ENCODE measurements at regions of chr3 and their contacts with region 1.

Region 1: DNA sequence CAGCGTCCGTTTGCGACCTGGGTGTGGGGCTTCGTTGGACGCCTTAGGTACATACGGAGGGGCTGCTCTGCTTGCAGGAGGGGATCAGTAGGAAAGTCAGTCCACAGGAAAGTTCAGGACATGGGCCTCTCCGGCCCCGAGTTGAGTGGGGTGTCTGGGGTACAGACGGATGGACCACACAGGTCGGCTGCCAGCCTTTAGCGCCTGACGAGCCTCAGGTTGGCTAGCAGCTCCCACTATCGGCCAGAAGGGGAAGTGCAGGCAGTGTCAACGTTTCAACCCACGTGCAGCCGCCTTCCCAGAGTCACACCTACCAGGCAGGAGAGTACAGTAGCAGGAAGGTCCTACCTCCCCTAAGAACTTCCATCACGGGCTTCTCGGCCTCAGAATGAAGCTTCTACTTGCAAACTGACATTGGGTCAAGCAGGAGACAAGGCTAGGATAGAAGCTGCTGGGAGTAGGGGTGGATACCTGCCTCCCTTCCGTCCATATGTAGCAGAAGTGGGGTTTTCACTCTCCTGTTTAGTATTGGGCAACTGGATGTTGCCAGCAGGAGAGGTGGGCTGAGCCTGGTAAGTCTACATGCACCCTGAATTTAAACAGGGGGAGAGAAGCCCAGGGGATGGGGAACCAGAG is 1.8 kb upstream of the SCN5A start:
- DNase-seq: peak; percentile 9
- ATAC-seq: peak; percentile 86
- H3K4me3 ChIP-seq: no peak overlapping the region
- H3K27ac ChIP-seq: no peak overlapping the region
- H3K4me1 ChIP-seq: no peaks in the 10 kb centered on the region; the same call in 1 of the 2 replicates
- H3K27me3 ChIP-seq: peaks cover 8 to 12% of the 10 kb centered on the region in 2 experiments; a peak in 3 of 4 replicates
- CTCF ChIP-seq: peak; percentile 97 to 100 (median 99)
- EP300 ChIP-seq: no peak
- POLR2A ChIP-seq: no peak
- RAD21 ChIP-seq: peak; percentile 77

Region 2: DNA sequence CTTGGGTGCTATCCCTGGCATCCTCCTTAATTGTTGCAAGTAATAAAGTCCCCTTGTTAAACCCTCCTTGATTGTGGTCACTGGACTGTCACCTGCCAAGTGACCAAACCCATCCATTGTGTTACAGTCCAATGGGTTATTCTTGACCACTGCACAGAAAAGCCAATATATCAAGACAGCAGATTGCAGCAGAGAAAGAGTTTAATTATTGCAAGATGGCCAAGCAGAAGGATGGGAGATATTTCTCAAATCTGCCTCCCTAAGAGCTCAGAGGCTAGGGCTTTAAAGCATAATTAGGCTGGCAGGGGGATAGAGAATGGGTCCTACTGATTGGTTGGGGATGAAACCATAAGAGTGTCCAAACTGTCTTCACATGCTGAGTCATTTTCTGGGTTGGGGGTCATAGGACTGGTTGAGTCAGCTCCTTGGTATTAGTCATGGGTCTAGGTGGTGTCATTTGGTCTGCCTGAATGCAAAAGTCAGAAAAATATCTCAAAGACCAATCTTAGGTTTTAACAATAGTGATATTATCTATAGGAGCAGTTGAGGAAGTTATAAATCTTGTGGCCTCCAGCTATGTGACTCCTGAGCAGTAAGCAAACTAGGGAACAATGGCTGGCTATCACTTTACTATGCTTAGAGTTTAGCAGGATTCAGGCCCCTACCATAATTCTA is 323.8 kb before region 1 on chr3:
- CTCF ChIA-PET with region 1: interaction called, 3 read pairs
- POLR2A ChIA-PET with region 1: no interaction called
- RAD21 ChIA-PET with region 1: no interaction called
- SMC1A ChIA-PET with region 1: no interaction called
- in situ Hi-C with region 1: no loop called
- intact Hi-C with region 1: loop called (anchors 10 kb)
- DNase-seq: no peak
- ATAC-seq: no peak
- H3K4me3 ChIP-seq: no peak overlapping the region
- H3K27ac ChIP-seq: no peak overlapping the region
- H3K4me1 ChIP-seq: no peaks in the 10 kb centered on the region
- H3K27me3 ChIP-seq: no peaks in the 10 kb centered on the region
- CTCF ChIP-seq: no peak
- EP300 ChIP-seq: no peak
- POLR2A ChIP-seq: no peak
- RAD21 ChIP-seq: no peak

Region 3: DNA sequence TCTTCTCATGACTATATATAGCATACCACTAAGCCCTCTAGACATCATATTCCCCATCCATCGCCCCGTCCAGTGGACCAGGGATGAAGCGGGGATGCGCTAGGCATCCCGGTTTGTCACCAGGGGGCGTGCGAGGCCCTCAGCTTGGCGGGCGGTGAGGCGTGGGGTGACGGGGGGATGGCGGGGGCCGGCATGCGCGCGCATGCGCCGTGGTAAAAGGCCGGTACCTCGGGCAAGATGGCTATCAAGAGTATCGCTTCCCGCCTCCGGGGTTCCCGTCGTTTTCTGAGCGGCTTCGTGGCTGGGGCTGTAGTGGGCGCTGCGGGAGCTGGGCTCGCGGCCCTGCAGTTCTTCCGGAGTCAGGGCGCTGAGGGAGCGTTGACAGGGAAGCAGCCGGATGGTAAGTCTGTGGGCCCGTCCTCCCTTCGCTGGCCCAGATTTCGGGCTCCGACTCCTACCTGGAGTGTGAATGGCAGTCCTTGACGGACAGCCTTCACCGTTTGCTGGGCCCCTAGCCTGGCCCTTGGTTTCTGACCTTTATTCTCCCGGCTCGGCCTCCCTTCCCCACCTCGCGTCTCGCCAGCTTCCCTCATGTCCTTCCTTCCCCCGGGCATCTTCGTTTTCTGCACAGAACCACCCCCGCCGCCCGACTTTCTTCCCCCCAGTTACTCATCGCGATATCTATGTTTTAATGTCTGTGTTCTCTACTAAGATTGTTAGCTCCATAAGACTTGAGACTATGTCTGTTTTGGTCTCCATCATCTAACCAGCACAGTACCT is 155.0 kb before region 1 on chr3 and contains the start of gene EXOG:
- CTCF ChIA-PET with region 1: interaction called, 12 read pairs
- POLR2A ChIA-PET with region 1: interaction called, 5 read pairs
- RAD21 ChIA-PET with region 1: interaction called, 10 read pairs
- SMC1A ChIA-PET with region 1: no interaction called
- in situ Hi-C with region 1: no loop called
- intact Hi-C with region 1: loop called (anchors 10 kb)
- DNase-seq: peak; percentile 67
- ATAC-seq: peak; percentile 93
- H3K4me3 ChIP-seq: peak within 1 kb of the TSS; percentile 81
- H3K27ac ChIP-seq: peak within 1 kb of the TSS; percentile 82
- H3K4me1 ChIP-seq: no peaks in the 10 kb centered on the region
- H3K27me3 ChIP-seq: no peaks in the 10 kb centered on the region
- CTCF ChIP-seq: peak; percentile 81 to 96 (median 86)
- EP300 ChIP-seq: no peak
- POLR2A ChIP-seq: peak; percentile 77
- RAD21 ChIP-seq: peak; percentile 60
- polyA plus RNA-seq, gene EXOG: 7.8 to 8.6 TPM

Region 4: DNA sequence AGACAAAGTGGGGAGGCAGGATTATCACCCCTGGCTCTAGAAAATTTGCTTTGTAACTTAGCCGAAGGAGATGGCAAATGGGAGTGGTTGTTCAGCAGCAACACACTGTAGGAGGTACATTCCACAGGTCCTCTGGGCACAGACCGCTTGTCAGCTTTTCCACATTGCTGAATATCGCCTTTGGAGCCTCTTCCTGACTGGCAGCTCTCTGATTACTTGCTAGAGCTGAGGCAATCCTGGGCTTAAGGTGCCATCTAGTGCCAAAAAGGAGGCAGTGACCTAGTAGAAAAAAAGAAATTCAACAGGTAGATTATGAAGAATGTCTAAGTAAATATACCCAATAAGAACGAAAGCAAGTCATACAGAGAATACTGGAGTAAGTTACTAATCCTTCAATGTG is 11.3 kb after region 1 on chr3:
- CTCF ChIA-PET with region 1: interaction called, 12 read pairs
- POLR2A ChIA-PET with region 1: no interaction called
- RAD21 ChIA-PET with region 1: no interaction called
- SMC1A ChIA-PET with region 1: interaction called, 3 read pairs
- in situ Hi-C with region 1: no loop called
- intact Hi-C with region 1: no loop called
- DNase-seq: no peak
- ATAC-seq: peak; percentile 45
- H3K4me3 ChIP-seq: no peak overlapping the region
- H3K27ac ChIP-seq: no peak overlapping the region
- H3K4me1 ChIP-seq: no peaks in the 10 kb centered on the region
- H3K27me3 ChIP-seq: no peaks in the 10 kb centered on the region
- CTCF ChIP-seq: peak; percentile 23 to 40 (median 28); a peak in 4 of 6 replicates
- EP300 ChIP-seq: no peak
- POLR2A ChIP-seq: no peak
- RAD21 ChIP-seq: 0 out of 2 replicates have a peak, but pooled peaks have one; percentile 24

Region 5: DNA sequence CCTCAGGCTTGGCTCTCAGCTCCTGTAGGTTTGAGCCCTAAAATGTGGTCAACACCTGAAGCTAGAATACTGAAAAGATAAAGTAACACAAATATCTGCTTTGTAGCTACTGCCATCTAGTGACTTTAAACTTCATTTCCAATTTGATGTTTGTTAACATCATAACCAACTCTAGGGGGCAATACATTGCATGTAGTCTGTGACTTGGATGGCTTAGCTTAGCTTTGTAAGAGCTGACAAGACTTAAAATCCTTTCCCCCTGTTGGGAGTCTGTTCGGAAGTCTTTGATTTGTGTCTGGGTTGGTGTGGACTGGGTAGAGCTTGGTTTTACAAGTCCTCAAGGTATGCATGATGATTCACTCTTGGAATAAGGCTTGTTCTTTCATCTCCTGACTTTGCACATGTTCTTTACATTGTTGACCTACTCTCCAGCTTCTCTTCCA is 348.8 kb after region 1 on chr3:
- CTCF ChIA-PET with region 1: interaction called, 10 read pairs
- POLR2A ChIA-PET with region 1: no interaction called
- RAD21 ChIA-PET with region 1: interaction called, 7 read pairs
- SMC1A ChIA-PET with region 1: interaction called, 7 read pairs
- in situ Hi-C with region 1: no loop called
- intact Hi-C with region 1: loop called (anchors 10 kb)
- DNase-seq: peak; percentile 35
- ATAC-seq: peak; percentile 96
- H3K4me3 ChIP-seq: no peak overlapping the region
- H3K27ac ChIP-seq: no peak overlapping the region
- H3K4me1 ChIP-seq: no peaks in the 10 kb centered on the region
- H3K27me3 ChIP-seq: no peaks in the 10 kb centered on the region
- CTCF ChIP-seq: peak; percentile 79 to 95 (median 93)
- EP300 ChIP-seq: no peak
- POLR2A ChIP-seq: no peak
- RAD21 ChIP-seq: peak; percentile 79

Region 6: GRCh38 chr3:39028546-39028945 is 377.3 kb after region 1 on chr3:
- CTCF ChIA-PET with region 1: interaction called, 12 read pairs
- POLR2A ChIA-PET with region 1: no interaction called
- RAD21 ChIA-PET with region 1: no interaction called
- SMC1A ChIA-PET with region 1: interaction called, 7 read pairs
- in situ Hi-C with region 1: no loop called
- intact Hi-C with region 1: loop called (anchors 5 kb)
- DNase-seq: no peak
- ATAC-seq: no peak
- H3K4me3 ChIP-seq: no peak overlapping the region
- H3K27ac ChIP-seq: no peak overlapping the region
- H3K4me1 ChIP-seq: no peaks in the 10 kb centered on the region
- H3K27me3 ChIP-seq: peaks cover 0 to 2% of the 10 kb centered on the region in 2 experiments; a peak in 1 of 4 replicates
- CTCF ChIP-seq: no peak
- EP300 ChIP-seq: no peak
- POLR2A ChIP-seq: no peak
- RAD21 ChIP-seq: no peak

Region 7: GRCh38 chr3:39038165-39038564 is 386.9 kb after region 1 on chr3:
- CTCF ChIA-PET with region 1: no interaction called
- POLR2A ChIA-PET with region 1: no interaction called
- RAD21 ChIA-PET with region 1: no interaction called
- SMC1A ChIA-PET with region 1: no interaction called
- in situ Hi-C with region 1: no loop called
- intact Hi-C with region 1: loop called (anchors 5 kb)
- DNase-seq: no peak
- ATAC-seq: no peak
- H3K4me3 ChIP-seq: no peak overlapping the region
- H3K27ac ChIP-seq: no peak overlapping the region
- H3K4me1 ChIP-seq: no peaks in the 10 kb centered on the region
- H3K27me3 ChIP-seq: no peaks in the 10 kb centered on the region
- CTCF ChIP-seq: no peak
- EP300 ChIP-seq: no peak
- POLR2A ChIP-seq: no peak
- RAD21 ChIP-seq: no peak